ENCODE measurements at regions of chr22 and their contacts with region 1.

Region 1: DNA sequence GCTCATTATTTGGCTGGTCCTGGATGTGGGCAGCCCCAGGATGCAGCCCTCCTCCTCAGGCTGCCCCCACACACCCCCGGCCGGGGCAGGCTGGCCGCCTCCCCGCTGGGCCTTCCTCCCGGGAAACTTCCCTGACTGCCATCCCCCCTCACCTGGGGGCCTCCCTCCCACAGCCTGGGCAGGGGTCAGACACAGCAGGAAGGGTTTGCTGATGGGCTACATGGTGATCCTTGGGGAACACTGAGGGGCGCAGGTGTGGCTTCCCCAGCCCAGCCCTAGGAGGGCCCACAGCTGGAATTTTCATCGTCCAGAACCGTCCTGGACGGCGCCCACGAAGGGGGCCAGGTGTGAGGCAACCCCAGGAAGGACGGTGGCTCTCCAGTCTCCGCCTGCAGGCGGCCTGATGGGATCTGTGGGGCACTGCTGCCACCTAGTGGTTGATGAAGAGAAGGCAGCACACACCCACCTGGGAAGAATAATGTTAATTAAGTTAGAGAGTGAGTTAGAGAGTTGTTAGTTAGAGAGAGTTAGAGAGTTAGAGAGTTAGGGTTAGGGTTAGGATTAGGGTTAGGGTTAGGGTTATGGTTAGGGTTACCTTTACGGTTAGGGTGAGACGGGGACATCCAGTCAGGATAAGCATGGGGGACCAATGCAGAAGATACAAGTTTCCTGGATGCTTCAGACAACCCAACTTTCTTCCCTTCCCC is 75.9 kb upstream of the PRR5 start:
- DNase-seq: peak; percentile 65 to 71 (median 67)
- H3K4me3 ChIP-seq: no peak overlapping the region
- H3K4me3 Mint-ChIP-seq: no peak overlapping the region
- H3K27ac ChIP-seq: no peak overlapping the region
- H3K27ac Mint-ChIP-seq: peak overlapping the region in 4 of 7 donors; percentile 21 to 68 (median 60)
- H3K4me1 ChIP-seq: peaks cover 2 to 4% of the 10 kb centered on the region in 2 donors
- H3K4me1 Mint-ChIP-seq: no peaks in the 10 kb centered on the region
- H3K27me3 ChIP-seq: peaks cover 0 to 5% of the 10 kb centered on the region in 2 donors
- H3K27me3 Mint-ChIP-seq: peaks cover 10 to 17% (median 12%) of the 10 kb centered on the region in 3 donors
- CTCF ChIP-seq: peak; percentile 91

Region 2: DNA sequence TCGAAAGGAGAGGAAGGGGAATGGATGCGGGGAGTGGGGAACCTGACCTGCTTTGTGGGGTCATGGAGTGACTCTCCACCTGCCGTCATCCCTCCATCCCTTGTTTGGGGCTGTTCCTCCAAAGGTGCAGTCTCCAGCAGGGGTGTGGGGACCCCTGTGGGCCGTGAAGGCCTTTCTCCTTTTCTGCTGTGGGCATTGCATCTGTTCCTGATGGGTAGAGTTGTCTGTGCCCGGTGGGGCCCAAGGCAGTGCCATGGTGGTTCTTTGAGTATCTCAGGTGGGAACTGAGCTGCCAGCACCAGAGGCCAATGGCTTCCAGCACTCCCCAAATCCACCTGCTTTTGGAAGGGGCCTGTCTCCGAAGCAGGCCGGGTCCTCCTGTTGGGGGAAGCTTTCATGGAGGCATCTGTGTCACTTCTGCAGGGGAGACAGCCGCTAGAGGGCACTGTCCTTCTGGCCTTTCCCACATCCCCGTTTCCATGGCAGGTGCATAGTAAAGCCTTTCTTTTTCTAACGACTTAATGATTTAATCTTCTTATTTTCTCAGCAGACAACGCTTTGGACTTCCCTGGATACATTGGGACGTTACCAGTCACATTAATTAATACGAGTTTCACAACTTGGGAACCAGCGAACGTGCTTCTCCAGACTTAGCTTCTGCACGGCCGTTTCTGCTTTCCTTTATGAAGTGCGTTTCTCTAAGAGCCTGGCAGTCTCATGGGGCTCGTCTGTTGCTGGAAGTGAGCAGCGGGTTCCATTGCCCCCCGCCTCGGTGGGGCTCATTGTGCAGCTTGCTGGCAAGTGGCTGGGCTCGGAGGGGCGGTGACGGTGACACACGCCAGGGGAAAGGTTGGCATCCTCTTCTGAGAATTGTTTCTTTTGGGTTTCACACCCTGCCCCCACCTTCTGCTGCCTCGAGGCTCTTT is 544.9 kb before region 1 on chr22:
- intact Hi-C with region 1: loop called (anchors 2 to 5 kb)
- DNase-seq: peak; percentile 60 to 71 (median 66)
- H3K4me3 ChIP-seq: no peak overlapping the region
- H3K4me3 Mint-ChIP-seq: no peak overlapping the region
- H3K27ac ChIP-seq: no peak overlapping the region
- H3K27ac Mint-ChIP-seq: no peak overlapping the region
- H3K4me1 ChIP-seq: no peaks in the 10 kb centered on the region
- H3K4me1 Mint-ChIP-seq: no peaks in the 10 kb centered on the region
- H3K27me3 ChIP-seq: no peaks in the 10 kb centered on the region
- H3K27me3 Mint-ChIP-seq: peaks cover 0 to 3% (median 3%) of the 10 kb centered on the region in 3 donors
- CTCF ChIP-seq: peak; percentile 92

Region 3: GRCh38 chr22:44180706-44181032 is 445.5 kb before region 1 on chr22 and contains the start of gene PARVG:
- intact Hi-C with region 1: loop called (anchors 10 kb)
- DNase-seq: peak; percentile 47 to 62 (median 54)
- H3K4me3 ChIP-seq: peak within 1 kb of the TSS; percentile 56 to 90 (median 86)
- H3K4me3 Mint-ChIP-seq: peak within 1 kb of the TSS; percentile 90 to 95
- H3K27ac ChIP-seq: peak within 1 kb of the TSS; percentile 93 to 97
- H3K27ac Mint-ChIP-seq: peak within 1 kb of the TSS; percentile 96 to 100 (median 98)
- H3K4me1 ChIP-seq: peaks cover 32 to 44% of the 10 kb centered on the region in 2 donors
- H3K4me1 Mint-ChIP-seq: peaks cover 35% of the 10 kb centered on the region
- H3K27me3 ChIP-seq: no peaks in the 10 kb centered on the region
- H3K27me3 Mint-ChIP-seq: no peaks in the 10 kb centered on the region
- CTCF ChIP-seq: no peak
- polyA plus RNA-seq, gene PARVG: 169 to 577 (median 190) TPM

Region 4: DNA sequence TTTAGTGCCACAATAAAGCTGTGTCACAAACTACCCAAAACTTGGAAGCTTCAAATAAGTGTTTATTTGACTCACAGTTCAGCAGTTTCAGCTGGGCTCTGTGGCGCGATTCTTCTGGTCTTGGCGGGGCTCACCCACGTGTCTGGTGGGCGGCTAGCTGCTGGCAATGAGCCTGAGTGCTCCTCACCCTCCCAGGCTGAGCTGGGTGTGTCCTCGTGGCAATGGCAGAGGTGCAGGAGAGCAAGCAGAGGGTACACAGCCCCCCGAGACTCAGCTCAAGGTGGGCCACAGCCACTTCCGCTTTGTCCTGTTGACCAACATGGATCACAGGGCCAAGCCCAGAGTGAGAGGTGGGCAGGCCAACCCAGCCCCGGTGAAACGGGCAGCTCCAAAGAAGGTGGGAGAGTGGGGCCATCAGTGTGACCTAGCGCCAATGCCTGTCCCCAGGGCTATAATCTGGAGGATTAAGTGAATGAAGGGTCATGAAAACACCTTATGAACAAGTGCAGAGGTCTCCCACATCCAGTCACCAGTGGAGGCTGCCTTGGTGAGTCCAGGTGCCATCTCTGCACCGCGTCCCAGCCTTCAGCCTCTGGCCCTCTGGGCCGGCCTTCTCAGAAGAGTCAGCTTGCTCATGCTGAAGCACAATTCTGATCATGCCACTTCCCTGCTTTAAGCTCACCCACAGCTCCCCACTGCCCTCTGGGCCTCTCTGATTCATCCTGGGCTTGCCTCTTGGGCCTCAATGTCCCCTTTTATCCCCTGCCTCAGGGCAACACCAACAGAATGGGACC is 53.5 kb before region 1 on chr22:
- intact Hi-C with region 1: no loop called
- DNase-seq: no peak
- H3K4me3 ChIP-seq: no peak overlapping the region
- H3K4me3 Mint-ChIP-seq: no peak overlapping the region
- H3K27ac ChIP-seq: no peak overlapping the region
- H3K27ac Mint-ChIP-seq: peak overlapping the region in 1 of 7 donors; percentile 17
- H3K4me1 ChIP-seq: no peaks in the 10 kb centered on the region
- H3K4me1 Mint-ChIP-seq: peaks cover 5% of the 10 kb centered on the region
- H3K27me3 ChIP-seq: no peaks in the 10 kb centered on the region
- H3K27me3 Mint-ChIP-seq: peaks cover 7 to 17% (median 8%) of the 10 kb centered on the region in 3 donors
- CTCF ChIP-seq: no peak

Region 5: GRCh38 chr22:44603767-44604166 is 22.4 kb before region 1 on chr22:
- intact Hi-C with region 1: no loop called
- DNase-seq: peak; percentile 80 to 88 (median 84)
- H3K4me3 ChIP-seq: peak overlapping the region in 1 of 3 experiments; percentile 30
- H3K4me3 Mint-ChIP-seq: peak overlapping the region; percentile 49 to 87
- H3K27ac ChIP-seq: peak overlapping the region in 1 of 2 donors; percentile 57
- H3K27ac Mint-ChIP-seq: peak overlapping the region; percentile 66 to 93 (median 90)
- H3K4me1 ChIP-seq: peaks cover 45 to 58% of the 10 kb centered on the region in 2 donors
- H3K4me1 Mint-ChIP-seq: peaks cover 45% of the 10 kb centered on the region
- H3K27me3 ChIP-seq: no peaks in the 10 kb centered on the region
- H3K27me3 Mint-ChIP-seq: peaks cover 8 to 10% (median 9%) of the 10 kb centered on the region in 3 donors
- CTCF ChIP-seq: no peak